ENCODE measurements at regions of chr7 and their contacts with region 1.

Region 1: DNA sequence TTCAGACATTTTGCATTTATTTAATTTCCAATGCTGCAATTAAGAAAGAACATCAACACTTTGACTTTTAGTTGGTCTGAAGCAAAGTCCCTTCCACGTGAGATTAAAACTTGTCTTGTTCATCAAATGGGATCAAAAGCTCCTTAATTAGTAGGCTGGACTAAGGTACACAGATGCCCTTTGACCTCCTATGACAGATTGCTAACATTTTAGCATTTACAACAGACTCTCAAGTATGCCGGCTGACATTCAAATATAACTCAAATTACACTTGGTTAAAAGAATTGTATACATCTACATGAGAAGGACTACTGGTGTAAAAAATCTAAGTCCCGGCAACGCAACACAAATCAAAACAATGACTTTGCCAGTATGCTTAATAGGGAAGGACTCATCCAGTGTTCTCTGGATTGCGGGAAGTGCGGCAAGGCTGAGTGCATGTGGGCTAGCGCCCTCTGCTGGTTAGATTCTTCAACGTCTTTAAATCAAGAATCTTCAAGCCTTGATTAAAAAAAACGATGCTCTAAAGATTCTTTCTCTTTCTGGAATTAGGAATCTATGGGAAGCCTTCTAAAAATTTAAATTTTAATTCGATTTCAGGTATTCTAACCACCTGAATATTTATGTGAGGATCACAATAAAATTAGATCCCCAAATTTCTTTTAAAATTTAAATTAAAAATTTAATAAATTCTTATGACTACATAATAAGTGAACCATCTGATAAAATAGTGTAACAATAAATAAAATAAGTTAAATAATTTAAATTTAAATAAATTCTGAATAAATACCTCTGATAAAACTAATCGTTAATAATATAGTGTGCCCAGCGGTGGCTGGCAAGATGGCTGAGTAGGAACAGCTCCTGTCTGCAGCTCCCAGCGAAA is 444.7 kb downstream of the DGKB start:
- DNase-seq: peak in 10 of 14 experiments; percentile 5 to 71 (median 17)
- ATAC-seq: no peak
- H3K4me3 ChIP-seq: no peak overlapping the region
- H3K4me3 Mint-ChIP-seq: no peak overlapping the region
- H3K27ac ChIP-seq: no peak overlapping the region
- H3K27ac Mint-ChIP-seq: no peak overlapping the region
- H3K4me1 ChIP-seq: no peaks in the 10 kb centered on the region
- H3K4me1 Mint-ChIP-seq: peaks cover 4% of the 10 kb centered on the region
- H3K27me3 ChIP-seq: no peaks in the 10 kb centered on the region
- H3K27me3 Mint-ChIP-seq: peaks cover 3% of the 10 kb centered on the region
- CTCF ChIP-seq: peak; percentile 75

Region 2: GRCh38 chr7:12524794-12525386 is 1932.9 kb before region 1 on chr7:
- CTCF ChIA-PET with region 1: no interaction called
- POLR2A ChIA-PET with region 1: no interaction called
- intact Hi-C with region 1: loop called in 1 of 2 experiments (anchors 5 kb)
- DNase-seq: peak in 3 of 14 experiments; percentile 43 to 60 (median 54)
- ATAC-seq: no peak
- H3K4me3 ChIP-seq: no peak overlapping the region
- H3K4me3 Mint-ChIP-seq: no peak overlapping the region
- H3K27ac ChIP-seq: no peak overlapping the region
- H3K27ac Mint-ChIP-seq: no peak overlapping the region
- H3K4me1 ChIP-seq: no peaks in the 10 kb centered on the region
- H3K4me1 Mint-ChIP-seq: no peaks in the 10 kb centered on the region
- H3K27me3 ChIP-seq: peaks cover 0 to 12% of the 10 kb centered on the region in 2 experiments
- H3K27me3 Mint-ChIP-seq: peaks cover 38% of the 10 kb centered on the region
- CTCF ChIP-seq: peak; percentile 80

Region 3: GRCh38 chr7:12638851-12639467 is 1818.9 kb before region 1 on chr7:
- CTCF ChIA-PET with region 1: no interaction called
- POLR2A ChIA-PET with region 1: no interaction called
- intact Hi-C with region 1: loop called in 1 of 2 experiments (anchors 5 kb)
- DNase-seq: peak in 3 of 14 experiments; percentile 62 to 67 (median 66)
- ATAC-seq: peak; percentile 55
- H3K4me3 ChIP-seq: no peak overlapping the region
- H3K4me3 Mint-ChIP-seq: no peak overlapping the region
- H3K27ac ChIP-seq: no peak overlapping the region
- H3K27ac Mint-ChIP-seq: no peak overlapping the region
- H3K4me1 ChIP-seq: peaks cover 4% of the 10 kb centered on the region
- H3K4me1 Mint-ChIP-seq: peaks cover 29% of the 10 kb centered on the region
- H3K27me3 ChIP-seq: no peaks in the 10 kb centered on the region
- H3K27me3 Mint-ChIP-seq: no peaks in the 10 kb centered on the region
- CTCF ChIP-seq: peak; percentile 81

Region 4: GRCh38 chr7:13279854-13280435 is 1177.9 kb before region 1 on chr7:
- CTCF ChIA-PET with region 1: no interaction called
- POLR2A ChIA-PET with region 1: no interaction called
- intact Hi-C with region 1: loop called in 1 of 2 experiments (anchors 2 kb)
- DNase-seq: peak in 3 of 14 experiments; percentile 21 to 37 (median 28)
- ATAC-seq: no peak
- H3K4me3 ChIP-seq: no peak overlapping the region
- H3K4me3 Mint-ChIP-seq: no peak overlapping the region
- H3K27ac ChIP-seq: no peak overlapping the region
- H3K27ac Mint-ChIP-seq: no peak overlapping the region
- H3K4me1 ChIP-seq: no peaks in the 10 kb centered on the region
- H3K4me1 Mint-ChIP-seq: no peaks in the 10 kb centered on the region
- H3K27me3 ChIP-seq: peaks cover 0 to 15% of the 10 kb centered on the region in 2 experiments
- H3K27me3 Mint-ChIP-seq: peaks cover 16% of the 10 kb centered on the region
- CTCF ChIP-seq: peak; percentile 62

Region 5: DNA sequence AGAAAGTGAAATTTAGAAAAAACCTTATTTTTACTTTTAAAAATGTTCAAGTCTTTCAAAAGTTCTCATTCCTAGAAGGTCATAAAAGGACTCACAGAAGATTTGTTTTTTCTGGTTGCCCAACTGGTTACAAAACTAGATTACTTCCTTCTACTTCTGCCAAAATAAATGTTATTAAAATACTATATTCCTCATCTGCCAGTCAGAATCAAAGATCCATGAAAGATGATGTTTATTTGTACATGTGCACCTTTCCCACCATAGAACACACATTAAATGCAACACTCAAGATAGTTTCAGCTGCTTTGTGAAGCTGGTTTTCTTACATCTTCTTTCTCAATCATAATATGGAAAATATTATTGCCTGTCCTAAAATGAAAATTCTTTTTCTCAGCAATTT is 933.7 kb before region 1 on chr7:
- CTCF ChIA-PET with region 1: no interaction called
- POLR2A ChIA-PET with region 1: no interaction called
- intact Hi-C with region 1: loop called in 1 of 2 experiments (anchors 5 kb)
- DNase-seq: no peak
- ATAC-seq: no peak
- H3K4me3 ChIP-seq: no peak overlapping the region
- H3K4me3 Mint-ChIP-seq: no peak overlapping the region
- H3K27ac ChIP-seq: no peak overlapping the region
- H3K27ac Mint-ChIP-seq: no peak overlapping the region
- H3K4me1 ChIP-seq: no peaks in the 10 kb centered on the region
- H3K4me1 Mint-ChIP-seq: no peaks in the 10 kb centered on the region
- H3K27me3 ChIP-seq: no peaks in the 10 kb centered on the region
- H3K27me3 Mint-ChIP-seq: no peaks in the 10 kb centered on the region
- CTCF ChIP-seq: no peak